Body of pancreas (tissue), 4 donors: ENCODE measurements at regions of chr2 and their contacts with region 1.

Region 1: DNA sequence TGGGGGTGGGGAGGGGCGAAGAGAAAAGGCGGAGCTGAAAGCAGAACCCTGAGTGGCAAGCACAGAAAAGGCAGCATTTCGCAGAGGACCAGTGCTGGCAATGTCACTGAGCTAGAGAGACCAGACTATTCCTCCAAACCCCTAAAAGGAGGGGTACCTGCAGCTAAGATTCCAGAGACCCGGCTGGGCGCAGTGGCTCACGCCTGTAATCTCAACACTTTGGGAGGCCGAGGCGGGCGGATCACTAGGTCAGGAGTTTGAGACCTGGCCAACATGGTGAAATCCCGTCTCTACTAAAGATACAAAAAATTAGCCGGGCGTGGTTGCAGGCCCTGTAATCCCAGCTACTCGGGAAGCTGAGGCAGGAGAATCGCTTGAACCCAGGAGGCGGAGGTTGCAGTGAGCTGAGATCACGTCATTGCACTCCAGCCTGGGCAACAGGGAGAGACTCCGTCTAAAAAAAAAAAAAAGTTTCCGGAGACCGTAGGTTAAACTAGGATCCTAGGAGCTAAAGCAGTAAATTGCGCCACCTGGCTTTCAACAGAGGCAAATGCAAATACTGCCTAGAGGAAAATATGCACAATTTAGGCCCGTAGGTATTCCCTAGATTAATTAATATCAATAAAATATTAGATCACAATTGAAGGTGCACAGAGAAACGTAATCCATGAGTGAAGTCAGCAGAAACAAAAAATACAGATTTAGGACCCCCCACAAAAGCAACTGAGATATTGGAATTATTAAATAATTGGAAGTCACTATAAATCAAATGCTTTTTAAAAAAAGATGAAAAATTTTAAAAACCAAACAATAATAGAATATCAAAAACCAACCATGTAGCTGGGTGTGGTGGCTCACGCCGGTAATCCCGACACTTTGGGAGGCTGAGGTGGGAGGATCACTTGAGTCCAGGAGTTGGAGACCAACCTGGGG is 4.9 kb downstream of the UCN start:
- DNase-seq: peak; percentile 56 to 78 (median 70)
- ATAC-seq: peak; percentile 88
- H3K4me3 ChIP-seq: no peak overlapping the region
- H3K27ac ChIP-seq: peak overlapping the region in 1 of 4 donors; percentile 12
- H3K4me1 ChIP-seq: peaks cover 28% of the 10 kb centered on the region
- H3K27me3 ChIP-seq: peaks cover 0 to 19% of the 10 kb centered on the region in 2 donors
- CTCF ChIP-seq: peak; percentile 42 to 96 (median 92)
- POLR2A ChIP-seq: peak in 1 of 3 donors; percentile 18

Region 2: DNA sequence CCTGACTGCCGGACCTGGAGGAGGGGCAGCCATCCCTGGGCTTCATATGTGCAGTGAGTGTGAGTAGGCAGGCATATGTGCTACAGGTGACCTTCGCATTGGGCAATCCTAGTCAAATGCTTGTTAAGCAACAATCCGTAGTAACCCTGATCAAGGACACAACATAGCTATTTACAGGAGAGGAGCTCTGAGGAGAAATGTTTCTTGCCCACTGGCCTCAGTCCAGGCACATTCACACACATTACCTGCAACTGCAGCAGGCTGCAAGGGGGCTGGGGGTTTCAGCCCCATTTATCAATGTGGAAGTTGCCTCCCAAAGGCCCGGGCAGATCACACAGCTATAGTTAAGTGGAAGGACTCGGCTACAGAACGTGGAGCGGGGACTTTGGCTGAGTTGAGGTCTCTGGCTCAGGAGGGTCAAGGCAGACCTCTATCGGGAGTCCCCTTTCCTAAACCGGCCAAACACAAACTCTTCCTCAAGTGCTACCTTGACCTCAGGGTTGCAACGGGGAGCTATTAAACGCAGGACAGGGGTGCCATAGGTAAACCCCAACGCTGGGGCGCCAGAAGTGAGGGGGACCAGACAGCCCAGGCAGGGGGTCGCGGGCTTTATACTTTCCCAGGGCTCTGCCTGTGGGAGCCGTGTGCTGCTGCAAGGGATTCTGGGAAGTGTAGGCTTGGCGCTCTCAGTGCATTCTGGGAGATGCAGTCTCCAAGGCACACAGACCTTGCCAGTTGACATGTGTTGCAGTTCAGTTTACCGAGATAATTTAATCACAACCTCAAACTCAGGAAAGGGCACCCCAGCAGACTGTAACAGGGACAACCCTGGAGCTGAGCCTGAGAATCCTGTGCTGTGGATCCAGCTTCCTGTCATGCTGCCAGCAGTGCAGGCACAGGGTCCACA is 207.4 kb before region 1 on chr2:
- intact Hi-C with region 1: loop called (anchors 10 kb)
- DNase-seq: peak; percentile 72 to 82 (median 81)
- ATAC-seq: peak; percentile 87
- H3K4me3 ChIP-seq: no peak overlapping the region
- H3K27ac ChIP-seq: peak overlapping the region; percentile 5 to 51 (median 34)
- H3K4me1 ChIP-seq: peaks cover 24% of the 10 kb centered on the region
- H3K27me3 ChIP-seq: no peaks in the 10 kb centered on the region
- CTCF ChIP-seq: no peak
- POLR2A ChIP-seq: no peak

Region 3: GRCh38 chr2:27932396-27932795 is 629.0 kb after region 1 on chr2:
- intact Hi-C with region 1: no loop called
- DNase-seq: no peak
- ATAC-seq: no peak
- H3K4me3 ChIP-seq: no peak overlapping the region
- H3K27ac ChIP-seq: no peak overlapping the region
- H3K4me1 ChIP-seq: peaks cover 14% of the 10 kb centered on the region
- H3K27me3 ChIP-seq: no peaks in the 10 kb centered on the region
- CTCF ChIP-seq: no peak
- POLR2A ChIP-seq: no peak